Activated CD4-positive, alpha-beta T cell treated with anti-CD3 and anti-CD28 coated beads for 36 hours (primary cell): ENCODE measurements at regions of chr11 and their contacts with region 1.

Region 1: GRCh38 chr11:120682866-120683265 is 171.3 kb downstream of the GRIK4 start:
- DNase-seq: no peak
- ATAC-seq: no peak
- H3K4me3 Mint-ChIP-seq: no peak overlapping the region
- H3K27ac Mint-ChIP-seq: no peak overlapping the region
- H3K4me1 Mint-ChIP-seq: no peaks in the 10 kb centered on the region
- H3K27me3 Mint-ChIP-seq: peaks cover 29% of the 10 kb centered on the region

Region 2: DNA sequence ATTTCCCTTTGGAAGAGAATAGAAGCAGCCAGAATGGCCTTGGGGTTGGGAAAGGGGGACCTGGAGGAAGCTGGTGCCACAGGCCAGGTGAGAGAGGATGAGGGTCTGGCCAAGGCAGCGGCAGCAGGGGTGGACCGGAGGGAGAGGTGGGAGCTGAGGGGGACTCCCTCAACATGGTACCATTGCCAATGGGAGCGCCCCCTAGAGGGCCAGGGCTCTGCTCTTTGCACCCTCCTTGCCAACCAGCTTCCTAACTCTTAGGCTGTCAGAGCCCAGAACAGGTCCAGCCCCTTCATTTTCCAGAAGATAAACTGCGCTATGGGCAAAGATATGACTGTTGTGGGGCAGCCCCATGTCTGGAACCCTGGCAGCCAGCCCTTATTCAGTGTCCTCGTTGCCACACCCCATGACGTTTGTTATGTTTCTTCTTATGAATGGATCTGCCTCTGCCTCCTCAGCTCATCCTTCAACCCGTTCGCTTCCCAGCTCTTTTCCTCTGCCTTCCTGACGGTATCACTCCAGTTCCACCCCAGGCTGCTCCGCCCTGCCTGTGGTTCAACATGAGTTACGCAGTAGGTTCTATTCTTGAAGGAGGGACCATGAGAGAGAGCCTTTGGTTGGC is 13.8 kb after region 1 on chr11:
- CTCF ChIA-PET with region 1: interaction called, 12 read pairs
- POLR2A ChIA-PET with region 1: no interaction called
- intact Hi-C with region 1: no loop called
- DNase-seq: peak; percentile 11
- ATAC-seq: no peak
- H3K4me3 Mint-ChIP-seq: no peak overlapping the region
- H3K27ac Mint-ChIP-seq: no peak overlapping the region
- H3K4me1 Mint-ChIP-seq: no peaks in the 10 kb centered on the region
- H3K27me3 Mint-ChIP-seq: peaks cover 13% of the 10 kb centered on the region

Region 3: GRCh38 chr11:120952461-120953434 is 269.9 kb after region 1 on chr11:
- CTCF ChIA-PET with region 1: interaction called, 3 read pairs
- POLR2A ChIA-PET with region 1: no interaction called
- intact Hi-C with region 1: loop called in 1 of 2 experiments (anchors 1 kb)
- DNase-seq: peak; percentile 83
- ATAC-seq: peak; percentile 84
- H3K4me3 Mint-ChIP-seq: peak overlapping the region; percentile 11
- H3K27ac Mint-ChIP-seq: peak overlapping the region; percentile 29
- H3K4me1 Mint-ChIP-seq: peaks cover 16% of the 10 kb centered on the region
- H3K27me3 Mint-ChIP-seq: peaks cover 12% of the 10 kb centered on the region

Region 4: DNA sequence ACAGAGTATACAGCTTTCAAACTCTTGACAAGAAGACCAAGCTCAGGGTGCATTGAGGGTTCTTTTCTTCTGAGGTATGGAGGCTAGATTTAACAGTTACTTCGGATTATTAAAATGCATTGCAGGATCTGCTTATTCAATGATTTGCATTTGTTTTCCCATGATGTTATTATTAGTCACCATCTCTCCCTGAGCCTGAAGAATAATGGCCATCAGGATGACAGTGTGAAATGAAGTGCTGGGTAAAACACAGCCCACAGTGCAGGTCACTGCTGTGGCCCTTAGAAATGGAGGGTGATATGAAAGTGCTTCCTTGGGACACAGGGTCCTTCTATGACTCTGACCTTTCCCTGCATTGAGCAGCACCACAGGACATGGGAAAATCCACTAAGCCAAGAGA is 458.2 kb after region 1 on chr11:
- CTCF ChIA-PET with region 1: no interaction called
- POLR2A ChIA-PET with region 1: no interaction called
- intact Hi-C with region 1: no loop called
- DNase-seq: no peak
- ATAC-seq: no peak
- H3K4me3 Mint-ChIP-seq: no peak overlapping the region
- H3K27ac Mint-ChIP-seq: no peak overlapping the region
- H3K4me1 Mint-ChIP-seq: no peaks in the 10 kb centered on the region
- H3K27me3 Mint-ChIP-seq: no peaks in the 10 kb centered on the region